ENCODE measurements at regions of chr16 and their contacts with region 1.

Region 1: GRCh38 chr16:15548482-15548891 is 94.5 kb downstream of the MARF1 start:
- DNase-seq: no peak
- H3K4me3 ChIP-seq: no peak overlapping the region
- H3K27ac ChIP-seq: no peak overlapping the region
- H3K4me1 ChIP-seq: peaks cover 0 to 5% (median 4%) of the 10 kb centered on the region in 4 experiments; a peak in 3 of 7 replicates
- H3K27me3 ChIP-seq: no peaks in the 10 kb centered on the region
- CTCF ChIP-seq: no peak
- EP300 ChIP-seq: no peak
- POLR2A ChIP-seq: no peak
- RAD21 ChIP-seq: no peak

Region 2: DNA sequence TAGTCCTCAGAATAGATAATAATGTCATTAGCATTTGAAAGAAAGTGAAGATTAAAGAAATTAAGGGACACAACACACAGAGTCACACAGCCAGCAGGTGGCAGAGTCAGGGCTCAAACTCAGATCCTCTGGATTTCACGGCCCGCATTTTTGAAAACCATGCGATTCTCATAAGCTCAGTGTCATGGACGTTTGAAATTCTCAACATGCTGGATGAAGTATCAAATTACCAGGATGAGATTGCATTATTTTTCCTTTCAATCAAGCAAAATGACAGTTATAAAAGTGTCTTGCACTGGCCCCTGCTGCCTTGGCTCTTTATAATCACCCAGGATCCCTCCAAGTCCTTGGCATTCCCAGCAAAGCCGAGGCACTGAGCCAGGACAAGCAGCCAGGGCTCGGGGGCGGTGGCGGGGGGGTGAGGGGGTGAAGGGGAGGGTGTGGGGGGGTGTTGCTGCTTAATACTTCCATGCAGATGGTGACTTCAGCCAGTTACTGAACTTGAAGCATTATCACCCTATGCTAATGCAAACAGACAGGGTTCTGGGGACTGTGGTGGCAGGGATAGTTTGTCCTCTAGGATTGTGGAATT is 120.7 kb before region 1 on chr16:
- CTCF ChIA-PET with region 1: interaction called, 14 read pairs
- POLR2A ChIA-PET with region 1: no interaction called
- DNase-seq: no peak
- H3K4me3 ChIP-seq: no peak overlapping the region
- H3K27ac ChIP-seq: no peak overlapping the region
- H3K4me1 ChIP-seq: no peaks in the 10 kb centered on the region
- H3K27me3 ChIP-seq: no peaks in the 10 kb centered on the region
- CTCF ChIP-seq: peak in 2 of 3 experiments; percentile 16 to 35; a peak in 2 of 4 replicates
- EP300 ChIP-seq: no peak
- POLR2A ChIP-seq: no peak
- RAD21 ChIP-seq: peak; percentile 42 to 45; a peak in 3 of 4 replicates

Region 3: GRCh38 chr16:15559176-15559575 is 10.7 kb after region 1 on chr16:
- CTCF ChIA-PET with region 1: interaction called, 17 read pairs
- POLR2A ChIA-PET with region 1: interaction called, 4 read pairs
- DNase-seq: no peak
- H3K4me3 ChIP-seq: no peak overlapping the region
- H3K27ac ChIP-seq: no peak overlapping the region
- H3K4me1 ChIP-seq: no peaks in the 10 kb centered on the region
- H3K27me3 ChIP-seq: no peaks in the 10 kb centered on the region
- CTCF ChIP-seq: no peak
- EP300 ChIP-seq: no peak
- POLR2A ChIP-seq: no peak
- RAD21 ChIP-seq: no peak

Region 4: GRCh38 chr16:15636392-15636873 is 87.9 kb after region 1 on chr16:
- CTCF ChIA-PET with region 1: no interaction called
- POLR2A ChIA-PET with region 1: no interaction called
- DNase-seq: no peak
- H3K4me3 ChIP-seq: no peak overlapping the region
- H3K27ac ChIP-seq: no peak overlapping the region
- H3K4me1 ChIP-seq: no peaks in the 10 kb centered on the region
- H3K27me3 ChIP-seq: no peaks in the 10 kb centered on the region
- CTCF ChIP-seq: no peak
- EP300 ChIP-seq: no peak
- POLR2A ChIP-seq: no peak
- RAD21 ChIP-seq: no peak

Measured in H1 (cell line).